Activated T-helper 1 cell treated with anti-CD3 and anti-CD28 coated beads, Interleukin-12 subunit alpha, Interleukin-12 subunit beta, Interleukin-2, Interleukin-4 antibody, amounts not matched to agents 30 ng/mL and 10 ng/mL and 1 ng/mL, durations not matched to agents 14 hours and 24 hours and 36 hours (primary cell): ENCODE measurements at regions of chr5 and their contacts with region 1.

Region 1: DNA sequence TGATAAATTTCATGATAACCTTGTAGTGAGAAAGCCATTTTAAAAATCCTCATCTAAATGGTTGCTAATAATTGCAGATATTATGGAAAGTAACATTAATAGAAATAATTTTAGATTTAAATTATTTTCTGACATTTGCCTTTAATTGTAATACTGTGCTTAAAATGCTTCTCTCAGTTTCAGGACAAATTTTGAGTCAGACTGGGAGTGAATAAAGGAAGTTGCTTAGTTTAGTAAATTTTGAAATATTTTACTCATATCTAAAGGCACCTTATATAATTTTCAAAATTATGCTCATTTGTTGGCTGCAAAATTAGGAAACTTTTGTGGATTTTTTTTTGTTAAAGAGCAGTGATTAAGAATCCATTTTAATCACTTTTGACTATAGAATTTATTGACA is 93.8 kb downstream of the CSNK1G3 start:
- DNase-seq: no peak
- H3K4me3 Mint-ChIP-seq: no peak overlapping the region
- H3K27ac Mint-ChIP-seq: no peak overlapping the region
- H3K4me1 Mint-ChIP-seq: peaks cover 12% of the 10 kb centered on the region
- H3K27me3 Mint-ChIP-seq: no peaks in the 10 kb centered on the region

Region 2: DNA sequence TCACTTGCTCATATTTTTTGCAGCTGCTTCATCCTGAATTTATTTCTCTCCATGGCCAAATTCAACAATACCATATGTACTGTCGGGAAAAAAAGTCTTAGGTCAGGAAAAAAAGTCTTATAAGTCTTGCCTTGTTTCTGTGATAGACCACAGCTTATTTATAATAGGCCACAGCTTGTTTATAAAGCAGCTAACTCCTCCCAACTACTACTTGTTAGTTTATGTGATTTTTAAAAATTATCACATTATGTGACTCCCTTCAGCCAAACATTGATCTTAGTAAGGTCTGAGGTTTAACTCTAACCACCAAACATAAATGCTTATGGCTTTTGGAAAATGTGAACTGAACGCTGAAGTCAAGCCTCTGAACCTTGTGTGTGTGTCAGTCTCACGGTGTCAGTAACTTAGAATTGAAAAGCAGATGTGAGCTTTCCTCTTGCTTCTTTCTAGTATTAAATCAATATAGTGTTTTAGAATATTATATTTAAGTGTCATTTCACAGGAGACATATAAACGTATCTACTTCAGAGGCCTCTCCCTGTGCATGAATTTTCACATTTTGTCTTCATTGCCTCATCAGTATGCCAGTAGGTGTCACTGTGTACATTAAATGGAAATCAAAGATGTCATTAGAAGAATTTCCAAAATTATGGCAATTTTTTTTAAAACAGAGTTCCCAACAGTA is 709.1 kb before region 1 on chr5:
- intact Hi-C with region 1: loop called (anchors 5 kb)
- DNase-seq: no peak
- H3K4me3 Mint-ChIP-seq: no peak overlapping the region
- H3K27ac Mint-ChIP-seq: no peak overlapping the region
- H3K4me1 Mint-ChIP-seq: no peaks in the 10 kb centered on the region
- H3K27me3 Mint-ChIP-seq: peaks cover 2% of the 10 kb centered on the region

Region 3: DNA sequence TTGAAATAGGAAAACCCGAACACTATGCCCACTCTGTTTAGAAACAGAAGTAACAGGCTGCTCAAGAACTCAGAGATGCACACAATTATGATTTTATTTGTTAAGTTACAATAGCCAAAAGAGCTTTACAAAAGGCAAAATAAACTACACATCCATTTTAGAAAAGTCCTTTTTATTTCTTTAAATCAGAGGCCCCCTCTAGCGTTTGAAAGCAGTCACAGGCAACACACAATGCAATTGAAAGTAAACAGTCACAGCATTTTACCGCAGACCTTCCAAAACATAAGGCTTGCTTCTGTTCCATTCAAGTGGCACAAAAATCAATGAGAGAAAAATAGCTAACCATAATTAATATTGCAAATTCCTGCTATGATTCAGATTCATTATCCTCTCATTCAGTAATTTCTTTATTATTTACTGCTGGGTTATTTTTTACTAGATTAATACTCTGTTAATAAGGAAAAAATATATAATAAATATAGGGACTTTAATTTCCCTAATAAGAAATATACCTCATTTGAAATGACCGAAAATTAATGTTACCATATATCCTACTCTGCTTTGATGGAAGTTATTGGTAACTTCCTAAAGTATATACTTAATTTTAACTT is 260.9 kb before region 1 on chr5:
- intact Hi-C with region 1: no loop called
- DNase-seq: no peak
- H3K4me3 Mint-ChIP-seq: no peak overlapping the region
- H3K27ac Mint-ChIP-seq: no peak overlapping the region
- H3K4me1 Mint-ChIP-seq: no peaks in the 10 kb centered on the region
- H3K27me3 Mint-ChIP-seq: no peaks in the 10 kb centered on the region